ENCODE measurements at regions of chr16 and their contacts with region 1.

Region 1: GRCh38 chr16:74998481-74999218 is at the start of gene ZNRF1:
- DNase-seq: peak; percentile 82 to 87
- H3K4me3 ChIP-seq: peak within 1 kb of the TSS; percentile 74
- H3K27ac ChIP-seq: peak within 1 kb of the TSS; percentile 86
- H3K4me1 ChIP-seq: peaks cover 52% of the 10 kb centered on the region
- H3K27me3 ChIP-seq: no peaks in the 10 kb centered on the region
- CTCF ChIP-seq: peak; percentile 94
- total RNA-seq, gene ZNRF1: 64.4 and 79.3 TPM in 2 replicates

Region 2: GRCh38 chr16:74984535-74985296 is 13.9 kb before region 1 on chr16 and contains the start of gene WDR59:
- CTCF ChIA-PET with region 1: interaction called, 4 read pairs
- POLR2A ChIA-PET with region 1: interaction called, 18 read pairs
- intact Hi-C with region 1: no loop called
- DNase-seq: peak; percentile 99
- H3K4me3 ChIP-seq: peak within 1 kb of the TSS; percentile 89
- H3K27ac ChIP-seq: peak within 1 kb of the TSS; percentile 59
- H3K4me1 ChIP-seq: 0 out of 2 replicates have a peak, but pooled peaks cover 8% of the 10 kb centered on the region
- H3K27me3 ChIP-seq: no peaks in the 10 kb centered on the region
- CTCF ChIP-seq: no peak
- total RNA-seq, gene WDR59: 97.0 and 97.1 TPM in 2 replicates

Region 3: GRCh38 chr16:75044800-75045430 is 46.3 kb after region 1 on chr16:
- CTCF ChIA-PET with region 1: no interaction called
- POLR2A ChIA-PET with region 1: interaction called, 7 read pairs
- intact Hi-C with region 1: loop called (anchors 5 kb)
- DNase-seq: peak; percentile 67 to 96
- H3K4me3 ChIP-seq: no peak overlapping the region
- H3K27ac ChIP-seq: peak overlapping the region; percentile 81
- H3K4me1 ChIP-seq: peaks cover 69% of the 10 kb centered on the region
- H3K27me3 ChIP-seq: no peaks in the 10 kb centered on the region
- CTCF ChIP-seq: no peak

Region 4: GRCh38 chr16:75110637-75111513 is 112.2 kb after region 1 on chr16:
- CTCF ChIA-PET with region 1: interaction called, 26 read pairs
- POLR2A ChIA-PET with region 1: no interaction called
- intact Hi-C with region 1: loop called (anchors 1 kb)
- DNase-seq: peak; percentile 75 to 84
- H3K4me3 ChIP-seq: no peak overlapping the region
- H3K27ac ChIP-seq: no peak overlapping the region
- H3K4me1 ChIP-seq: peaks cover 40% of the 10 kb centered on the region
- H3K27me3 ChIP-seq: no peaks in the 10 kb centered on the region
- CTCF ChIP-seq: peak; percentile 89